ENCODE measurements at regions of chr4 and their contacts with region 1.

Region 1: DNA sequence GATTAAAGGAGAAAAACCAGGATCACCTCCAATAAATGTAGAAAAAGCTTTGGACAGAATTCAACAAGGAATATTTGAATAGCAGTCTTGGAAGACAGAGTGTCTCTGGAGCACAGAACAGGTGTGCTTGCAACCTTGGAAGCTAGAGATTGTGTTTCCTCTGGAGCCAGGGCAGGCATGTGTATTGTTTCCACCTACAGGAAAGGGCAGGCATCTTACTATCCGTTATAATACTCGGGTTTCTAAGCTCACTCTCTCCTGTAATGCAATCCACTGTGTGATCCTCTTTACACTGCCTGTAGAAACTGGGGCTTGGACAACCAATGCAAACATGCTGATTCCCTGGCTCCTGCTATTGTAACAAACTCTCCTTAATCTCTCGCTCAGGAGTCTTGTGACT is 14.4 kb downstream of the CCDC110 start:
- DNase-seq: no peak
- CTCF ChIP-seq: no peak

Region 2: GRCh38 chr4:184815046-184815877 is 641.9 kb before region 1 on chr4:
- CTCF ChIA-PET with region 1: no interaction called
- POLR2A ChIA-PET with region 1: no interaction called
- DNase-seq: peak; percentile 82
- CTCF ChIP-seq: no peak

Region 3: DNA sequence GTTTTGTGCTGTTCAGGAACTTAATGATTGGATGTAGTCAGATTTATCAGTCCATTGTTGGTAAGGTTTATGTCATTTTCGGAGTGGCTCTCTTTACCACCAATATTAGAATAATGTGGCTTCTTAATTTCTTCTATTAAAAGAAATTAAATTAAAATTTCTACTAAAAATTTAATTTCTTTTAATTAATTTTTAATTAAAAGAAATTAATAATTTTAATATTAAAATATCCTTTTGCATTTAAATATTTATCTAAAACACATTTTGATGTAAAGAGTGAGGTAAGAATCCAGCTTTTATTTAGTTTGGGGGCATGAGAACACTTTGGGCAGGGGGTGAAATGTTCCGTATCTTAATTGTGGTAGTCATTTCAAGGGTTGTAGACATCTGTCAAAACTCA is 15.7 kb before region 1 on chr4:
- CTCF ChIA-PET with region 1: interaction called, 12 read pairs
- POLR2A ChIA-PET with region 1: no interaction called
- DNase-seq: no peak
- CTCF ChIP-seq: no peak

Region 4: GRCh38 chr4:185471235-185472102 is 14.3 kb after region 1 on chr4 and contains the start of gene CCDC110:
- CTCF ChIA-PET with region 1: interaction called, 11 read pairs
- POLR2A ChIA-PET with region 1: interaction called, 3 read pairs
- DNase-seq: peak; percentile 100
- CTCF ChIP-seq: peak; percentile 81

Region 5: DNA sequence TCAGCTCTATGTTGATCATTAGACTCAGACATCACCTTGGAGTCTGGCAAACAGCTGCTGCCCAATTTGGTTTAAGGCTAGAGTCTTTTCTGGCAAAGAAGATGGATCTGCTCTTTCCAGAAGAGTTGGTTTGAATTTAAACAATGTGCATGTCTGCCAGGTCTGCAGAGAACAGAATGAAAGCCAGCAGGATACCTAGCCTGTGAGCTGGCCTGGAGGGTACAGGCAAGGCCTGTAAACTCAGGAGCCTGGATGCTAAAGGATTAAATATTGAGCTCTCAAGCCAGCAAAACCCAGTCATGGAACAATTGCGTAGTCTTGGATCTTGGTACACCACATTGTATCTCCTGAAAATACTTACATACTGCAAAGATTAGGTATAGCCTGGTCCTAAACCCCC is 93.8 kb after region 1 on chr4:
- CTCF ChIA-PET with region 1: no interaction called
- POLR2A ChIA-PET with region 1: no interaction called
- DNase-seq: no peak
- CTCF ChIP-seq: no peak

Measured in GM10248 (cell line).